Endothelial cell of umbilical vein (primary cell): ENCODE measurements at regions of chr1 and their contacts with region 1.

Region 1: DNA sequence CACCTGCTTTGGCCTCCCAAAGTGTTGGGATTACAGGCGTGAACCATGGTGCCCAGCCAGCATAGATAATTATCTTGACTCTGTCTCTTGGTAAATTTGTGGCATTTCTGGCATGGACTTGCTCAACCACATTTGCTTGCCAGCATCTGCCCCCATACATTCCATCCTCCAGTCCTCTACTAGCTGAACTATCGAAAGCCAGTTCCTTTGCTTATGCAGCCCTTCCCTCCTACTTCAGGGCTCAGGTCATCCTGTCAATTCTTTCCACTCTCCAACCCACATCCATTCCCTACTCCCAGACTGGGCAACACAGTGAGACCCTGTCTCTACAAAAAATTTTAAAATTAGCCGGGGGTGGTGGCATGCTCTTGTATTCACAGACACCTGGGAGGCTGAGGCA is 13.0 kb upstream of the UQCRHL start:
- DNase-seq: no peak
- H3K4me3 ChIP-seq: no peak overlapping the region
- H3K27ac ChIP-seq: no peak overlapping the region
- H3K4me1 ChIP-seq: no peaks in the 10 kb centered on the region
- H3K27me3 ChIP-seq: no peaks in the 10 kb centered on the region
- CTCF ChIP-seq: no peak
- POLR2A ChIP-seq: no peak

Region 2: DNA sequence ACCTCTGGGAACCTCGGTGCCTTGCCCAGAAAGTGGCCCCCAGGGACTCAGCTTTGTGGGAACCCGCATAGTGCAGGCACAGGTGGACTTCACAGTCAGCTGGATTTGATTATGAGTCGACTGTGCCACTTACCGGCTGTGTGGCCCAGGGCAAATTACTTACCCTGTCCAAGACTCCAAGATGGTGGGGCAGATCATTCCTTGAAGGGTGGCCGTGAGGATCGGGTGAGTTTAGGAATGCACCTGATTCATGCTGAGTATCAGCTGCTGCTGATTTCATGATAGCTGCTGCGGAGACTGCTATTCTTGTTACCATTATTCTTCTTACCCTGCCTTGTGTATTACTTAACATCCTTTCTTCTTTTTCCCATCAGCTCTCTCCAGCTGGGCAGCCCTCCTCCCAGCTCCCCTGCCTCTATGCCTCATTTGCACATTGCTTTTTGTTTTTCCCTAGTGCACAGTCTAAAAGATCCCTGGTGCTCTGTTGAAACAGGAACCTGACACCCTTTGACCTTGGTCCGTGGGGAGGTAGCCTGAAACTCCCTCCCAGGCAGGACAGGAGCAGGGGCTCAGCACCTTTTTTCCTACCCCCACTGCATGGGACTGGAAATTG is 614.0 kb before region 1 on chr1:
- CTCF ChIA-PET with region 1: no interaction called
- POLR2A ChIA-PET with region 1: no interaction called
- dilution Hi-C with region 1: no loop called
- intact Hi-C with region 1: no loop called
- DNase-seq: no peak
- H3K4me3 ChIP-seq: no peak overlapping the region
- H3K27ac ChIP-seq: no peak overlapping the region
- H3K4me1 ChIP-seq: peaks cover 3% of the 10 kb centered on the region
- H3K27me3 ChIP-seq: no peaks in the 10 kb centered on the region
- CTCF ChIP-seq: no peak
- POLR2A ChIP-seq: no peak

Region 3: DNA sequence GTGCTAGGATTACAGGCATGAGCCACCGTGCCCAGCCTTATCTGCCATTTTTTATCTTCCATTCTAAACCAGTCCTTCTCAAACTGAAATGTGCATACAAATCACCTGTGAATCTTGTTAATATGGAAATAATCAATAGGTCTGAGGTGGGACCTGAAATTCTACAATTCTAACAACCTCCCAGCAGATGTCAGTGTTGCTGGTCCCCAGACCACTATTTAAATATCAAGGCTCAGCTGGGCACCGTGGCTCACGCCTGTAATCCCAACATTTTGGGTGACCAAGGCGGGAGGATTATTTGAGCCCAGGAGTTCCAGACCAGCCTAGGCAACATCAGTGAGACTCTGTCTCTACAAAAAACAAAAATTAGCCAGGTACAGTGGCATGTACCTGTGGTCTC is 17.1 kb before region 1 on chr1:
- CTCF ChIA-PET with region 1: interaction called, 75 read pairs
- POLR2A ChIA-PET with region 1: no interaction called
- dilution Hi-C with region 1: no loop called
- intact Hi-C with region 1: no loop called
- DNase-seq: peak; percentile 45
- H3K4me3 ChIP-seq: no peak overlapping the region
- H3K27ac ChIP-seq: no peak overlapping the region
- H3K4me1 ChIP-seq: peaks cover 25% of the 10 kb centered on the region
- H3K27me3 ChIP-seq: no peaks in the 10 kb centered on the region
- CTCF ChIP-seq: peak in 1 of 2 donors; percentile 40
- POLR2A ChIP-seq: no peak

Region 4: DNA sequence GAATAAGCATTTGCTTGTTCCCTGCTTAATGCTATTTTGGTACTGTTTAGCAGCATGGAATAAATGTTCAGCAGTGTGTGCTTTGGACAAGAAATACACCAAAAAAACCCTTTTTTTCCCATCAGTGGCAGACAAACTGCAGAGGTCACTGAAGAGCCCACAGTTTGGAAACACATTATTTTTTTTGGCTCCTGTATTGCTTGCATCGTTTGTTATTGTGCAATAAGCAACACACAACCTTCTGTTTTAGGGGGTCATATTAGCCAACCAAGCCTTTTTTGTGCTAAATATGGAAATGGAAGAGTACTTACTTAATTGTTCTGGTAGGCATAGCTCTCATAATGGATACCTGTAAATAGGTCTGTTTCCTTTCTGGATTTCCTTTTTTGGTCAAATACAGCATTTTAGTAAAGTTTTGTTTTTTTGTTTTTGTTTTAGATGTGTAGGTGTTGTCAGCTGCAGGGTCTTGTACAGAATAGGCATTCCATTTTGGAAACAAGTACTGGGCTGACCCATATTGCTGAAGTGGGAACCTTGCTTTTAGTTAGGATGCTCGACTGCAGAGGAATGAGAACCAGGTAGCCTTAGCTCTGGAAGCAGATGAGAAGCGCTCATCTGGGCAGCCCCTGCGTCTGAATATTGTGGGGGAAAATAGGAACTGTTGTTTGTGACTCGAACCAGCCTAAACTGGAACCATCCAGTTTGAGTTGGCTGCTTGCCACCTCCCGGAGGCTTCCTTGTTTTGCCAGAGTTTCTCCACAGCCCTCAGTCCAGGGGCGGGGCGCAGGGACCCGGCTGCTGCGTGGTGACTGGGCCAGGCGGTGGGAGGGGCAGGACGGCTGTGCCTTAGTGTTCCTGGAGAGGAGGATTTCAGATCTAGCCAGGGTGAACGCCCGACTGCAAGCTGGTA is 65.5 kb after region 1 on chr1:
- CTCF ChIA-PET with region 1: interaction called, 14 read pairs
- POLR2A ChIA-PET with region 1: no interaction called
- dilution Hi-C with region 1: no loop called
- intact Hi-C with region 1: loop called (anchors 5 kb)
- DNase-seq: peak; percentile 97
- H3K4me3 ChIP-seq: peak overlapping the region; percentile 26 to 68 (median 29)
- H3K27ac ChIP-seq: peak overlapping the region; percentile 90
- H3K4me1 ChIP-seq: peaks cover 27% of the 10 kb centered on the region
- H3K27me3 ChIP-seq: no peaks in the 10 kb centered on the region
- CTCF ChIP-seq: no peak
- POLR2A ChIP-seq: peak; percentile 70

Region 5: DNA sequence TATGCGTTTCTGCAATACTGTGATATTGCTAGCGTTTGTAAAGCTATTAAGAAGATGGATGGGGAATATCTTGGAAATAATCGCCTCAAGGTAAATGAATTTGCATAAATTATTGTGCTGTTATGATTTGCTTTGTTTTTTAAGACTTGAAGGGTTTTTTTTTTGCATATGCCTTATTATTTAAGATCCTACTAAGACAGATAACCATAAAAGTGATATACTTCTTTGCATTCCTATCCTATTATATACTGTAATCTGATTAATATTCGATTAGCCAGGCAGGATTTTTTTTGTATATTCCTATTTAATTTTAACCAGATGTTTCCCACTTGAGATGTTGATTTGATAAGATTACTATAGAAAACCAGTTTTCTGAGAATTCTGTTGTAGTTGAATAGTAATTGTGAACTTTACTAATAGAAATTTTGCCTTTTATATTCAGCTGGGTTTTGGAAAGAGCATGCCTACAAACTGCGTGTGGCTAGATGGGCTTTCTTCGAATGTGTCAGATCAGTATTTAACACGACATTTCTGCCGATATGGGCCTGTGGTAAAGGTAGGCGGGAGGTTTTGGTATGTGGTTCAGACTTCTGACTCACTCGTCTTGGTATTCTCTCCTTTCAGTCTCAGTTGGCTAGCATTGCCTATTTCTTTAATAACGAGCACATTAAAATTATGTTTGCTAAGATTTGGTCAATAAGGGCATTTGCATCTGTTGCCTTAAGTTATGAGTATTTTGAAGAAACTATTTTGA is 98.7 kb after region 1 on chr1:
- CTCF ChIA-PET with region 1: interaction called, 17 read pairs
- POLR2A ChIA-PET with region 1: no interaction called
- dilution Hi-C with region 1: no loop called
- intact Hi-C with region 1: no loop called
- DNase-seq: no peak
- H3K4me3 ChIP-seq: no peak overlapping the region
- H3K27ac ChIP-seq: no peak overlapping the region
- H3K4me1 ChIP-seq: peaks cover 5% of the 10 kb centered on the region
- H3K27me3 ChIP-seq: no peaks in the 10 kb centered on the region
- CTCF ChIP-seq: no peak
- POLR2A ChIP-seq: no peak

Region 6: DNA sequence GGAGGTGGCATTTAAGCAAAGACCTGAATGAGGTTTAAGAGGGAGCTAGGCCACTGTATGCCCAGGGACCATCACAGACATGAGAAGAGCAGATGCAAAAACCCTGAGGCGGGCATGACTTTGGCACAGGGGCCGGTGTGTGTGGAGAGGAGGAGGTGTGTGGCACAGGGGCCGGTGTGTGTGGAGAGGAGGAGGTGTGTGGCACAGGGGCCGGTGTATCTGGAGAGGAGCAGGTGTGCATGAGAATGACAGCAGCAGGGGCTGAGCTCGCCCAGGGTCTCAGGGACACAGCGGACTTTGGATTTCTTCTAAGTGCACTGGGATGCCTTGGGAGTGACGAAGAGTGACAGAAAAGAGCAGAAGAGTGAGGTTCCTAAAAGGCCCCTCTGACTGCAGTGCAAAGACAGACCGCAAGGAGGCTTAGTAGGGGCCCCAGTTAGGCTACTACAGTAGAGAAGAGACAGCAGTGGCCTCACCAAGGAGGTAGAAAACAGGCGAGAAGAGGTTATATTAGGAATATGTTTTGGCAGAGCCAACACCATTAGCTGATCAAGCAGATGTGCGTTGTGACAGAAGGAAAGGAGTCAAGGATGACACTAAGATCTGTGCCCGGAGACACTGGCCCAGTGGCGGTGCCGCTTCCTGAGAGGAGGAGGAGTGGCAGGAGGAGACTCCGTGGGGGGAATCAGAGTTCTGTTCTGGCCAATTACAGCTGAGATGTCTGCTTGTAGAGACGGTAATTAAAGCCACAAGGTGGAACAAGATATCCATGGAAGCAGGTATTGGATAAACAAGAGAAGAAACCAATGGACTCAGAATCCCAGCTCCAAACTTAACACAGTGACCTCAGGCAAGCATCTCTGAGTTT is 137.0 kb after region 1 on chr1:
- CTCF ChIA-PET with region 1: interaction called, 18 read pairs
- POLR2A ChIA-PET with region 1: no interaction called
- dilution Hi-C with region 1: no loop called
- intact Hi-C with region 1: no loop called
- DNase-seq: no peak
- H3K4me3 ChIP-seq: no peak overlapping the region
- H3K27ac ChIP-seq: peak overlapping the region; percentile 48
- H3K4me1 ChIP-seq: peaks cover 49% of the 10 kb centered on the region
- H3K27me3 ChIP-seq: no peaks in the 10 kb centered on the region
- CTCF ChIP-seq: peak in 1 of 2 donors; percentile 38
- POLR2A ChIP-seq: no peak